Activated CD4-positive, alpha-beta memory T cell treated with anti-CD3 and anti-CD28 coated beads for 36 hours (primary cell): ENCODE measurements at regions of chr1 and their contacts with region 1.

Region 1: DNA sequence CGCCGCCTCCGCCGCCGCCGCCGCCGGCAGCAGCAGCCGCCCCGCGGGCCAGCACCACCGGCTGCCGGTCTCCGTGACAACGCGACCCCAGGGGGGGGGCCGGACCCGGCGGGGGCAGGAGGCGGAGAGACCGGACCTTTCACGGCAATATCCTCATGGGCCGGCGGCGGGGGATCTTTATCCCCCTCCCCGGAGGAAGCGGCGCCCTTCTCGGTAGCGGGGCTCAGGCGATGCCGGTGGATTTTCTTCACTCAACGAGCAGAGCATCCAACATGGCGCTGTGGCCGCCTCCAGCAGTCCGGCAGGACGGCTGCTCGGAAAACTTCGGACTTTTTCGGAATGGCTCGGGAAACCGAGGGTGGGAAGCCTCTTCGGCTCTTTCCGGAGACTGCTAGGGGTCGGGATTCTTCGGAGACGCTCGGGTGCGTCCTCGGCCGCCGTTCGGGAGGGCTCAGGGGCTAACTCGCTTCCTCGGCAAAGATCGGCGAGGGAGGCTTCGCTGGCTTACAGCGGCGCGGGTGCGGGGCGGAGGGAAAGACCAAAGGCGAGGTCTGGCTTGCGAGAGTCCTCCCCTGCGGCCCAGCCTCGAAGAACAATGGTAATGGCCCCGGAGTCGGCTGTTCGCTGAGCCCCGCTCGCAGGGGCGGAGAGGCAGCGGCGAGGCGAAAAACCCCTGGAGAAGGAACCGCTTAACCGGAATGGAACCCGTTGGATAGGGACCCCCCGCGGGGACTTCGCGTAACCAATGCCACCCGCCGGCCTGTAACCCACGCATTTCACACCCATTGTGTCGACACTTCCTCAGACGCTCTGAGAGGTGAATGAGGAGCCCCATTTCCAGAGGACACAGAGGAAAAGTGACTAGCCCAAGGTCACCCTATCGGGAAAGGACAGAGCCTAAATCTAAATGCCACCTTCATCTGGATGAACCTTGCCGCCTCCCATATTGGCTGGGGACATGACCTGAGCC is at the start of gene EIF4G3:
- DNase-seq: peak; percentile 100
- H3K4me3 Mint-ChIP-seq: peak within 1 kb of the TSS; percentile 84
- H3K27ac Mint-ChIP-seq: peak within 1 kb of the TSS; percentile 90
- H3K4me1 Mint-ChIP-seq: peaks cover 19% of the 10 kb centered on the region
- H3K27me3 Mint-ChIP-seq: no peaks in the 10 kb centered on the region
- total RNA-seq, gene EIF4G3: 39.9 to 42.7 TPM

Region 2: DNA sequence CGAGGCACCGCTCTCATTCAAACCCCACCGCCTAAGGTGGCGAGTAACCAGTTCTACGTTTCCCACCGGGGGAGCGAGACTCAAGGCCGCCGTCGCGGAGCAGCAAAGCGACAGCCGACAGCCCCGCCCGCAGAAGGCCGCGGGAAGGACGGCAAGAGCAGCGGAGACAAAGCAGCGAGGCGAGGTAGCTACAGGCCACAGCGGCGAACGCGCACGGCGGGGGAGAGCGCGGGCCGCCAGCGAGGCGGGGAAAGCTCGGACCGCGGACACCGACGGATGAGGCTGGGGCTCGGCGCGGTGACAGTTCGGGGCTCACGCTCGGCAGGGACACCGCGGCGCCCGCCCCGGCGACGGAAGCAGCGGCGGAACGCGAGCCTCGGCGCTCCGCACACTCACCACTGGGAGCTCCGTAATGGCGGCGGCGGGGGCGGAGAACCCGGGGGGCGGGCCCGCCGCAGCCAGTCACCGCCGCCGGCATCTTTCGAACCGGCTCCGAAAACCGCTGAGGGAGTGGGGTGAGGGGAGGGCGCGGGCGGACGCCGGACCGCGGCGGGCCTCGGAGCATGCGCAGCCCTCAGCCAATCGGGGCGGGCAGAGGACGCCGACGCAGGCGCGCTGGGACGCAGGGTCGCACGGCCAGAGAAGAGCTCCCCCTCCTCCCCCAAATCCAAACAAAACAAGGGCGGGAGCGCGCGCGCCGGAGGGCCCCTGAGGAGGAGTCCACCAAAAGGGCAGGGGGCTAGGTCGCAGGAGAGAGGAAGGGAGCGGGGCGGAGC is 390.4 kb before region 1 on chr1:
- CTCF ChIA-PET with region 1: interaction called, 3 read pairs
- POLR2A ChIA-PET with region 1: interaction called, 4 read pairs
- intact Hi-C with region 1: loop called (anchors 1 kb)
- DNase-seq: peak; percentile 97
- H3K4me3 Mint-ChIP-seq: peak overlapping the region; percentile 92
- H3K27ac Mint-ChIP-seq: peak overlapping the region; percentile 93
- H3K4me1 Mint-ChIP-seq: peaks cover 27% of the 10 kb centered on the region
- H3K27me3 Mint-ChIP-seq: peaks cover 3% of the 10 kb centered on the region

Region 3: GRCh38 chr1:20992322-20993056 is 184.4 kb before region 1 on chr1:
- CTCF ChIA-PET with region 1: no interaction called
- POLR2A ChIA-PET with region 1: no interaction called
- intact Hi-C with region 1: loop called (anchors 10 kb)
- DNase-seq: no peak
- H3K4me3 Mint-ChIP-seq: peak overlapping the region; percentile 40
- H3K27ac Mint-ChIP-seq: peak overlapping the region; percentile 75
- H3K4me1 Mint-ChIP-seq: peaks cover 24% of the 10 kb centered on the region
- H3K27me3 Mint-ChIP-seq: no peaks in the 10 kb centered on the region

Region 4: DNA sequence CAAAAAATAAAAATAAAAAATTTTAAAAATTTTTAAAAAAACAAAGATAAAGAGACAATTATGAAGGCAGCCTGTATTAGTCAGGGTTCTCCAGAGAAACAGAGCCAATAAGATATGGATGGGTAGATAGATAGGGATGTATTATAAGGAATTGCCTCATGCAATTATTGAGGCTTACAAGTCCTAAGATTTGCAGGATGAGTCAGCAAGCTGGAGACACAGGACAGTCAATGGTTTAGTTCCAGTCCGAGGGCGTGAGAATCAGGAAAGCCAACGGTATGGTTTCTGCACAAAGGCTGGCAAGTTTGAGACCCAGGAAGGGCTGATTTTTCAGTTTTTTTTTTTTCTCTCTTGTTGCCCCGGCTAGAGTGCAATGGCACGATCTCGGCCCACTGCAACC is 23.9 kb after region 1 on chr1:
- CTCF ChIA-PET with region 1: interaction called, 36 read pairs
- POLR2A ChIA-PET with region 1: no interaction called
- intact Hi-C with region 1: no loop called
- DNase-seq: no peak
- H3K4me3 Mint-ChIP-seq: no peak overlapping the region
- H3K27ac Mint-ChIP-seq: no peak overlapping the region
- H3K4me1 Mint-ChIP-seq: no peaks in the 10 kb centered on the region
- H3K27me3 Mint-ChIP-seq: peaks cover 4% of the 10 kb centered on the region